Heart right ventricle (tissue), 16 donors: ENCODE measurements at regions of chr1 and their contacts with region 1.

Region 1: DNA sequence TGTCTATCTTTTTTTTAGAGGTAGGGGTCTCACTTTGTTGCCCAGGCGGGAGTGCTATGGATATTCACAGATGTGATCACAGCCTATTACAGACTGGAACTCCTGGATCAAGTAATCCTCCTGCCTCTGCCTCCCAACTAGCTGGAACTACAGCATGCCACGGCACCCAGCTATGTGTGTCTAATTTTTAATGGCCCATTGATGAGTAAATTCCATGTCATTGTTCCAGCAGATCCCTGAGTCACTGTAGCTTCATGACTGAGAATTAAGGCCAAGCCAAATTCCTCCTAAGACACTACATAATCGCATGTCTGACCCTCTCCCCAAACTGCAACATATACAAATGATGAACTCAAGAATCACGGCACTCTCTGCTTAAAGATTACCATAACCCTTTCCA is 84.2 kb upstream of the RGS2 start:
- DNase-seq: no peak
- ATAC-seq: no peak
- H3K4me3 ChIP-seq: no peak overlapping the region
- H3K27ac ChIP-seq: no peak overlapping the region
- H3K4me1 ChIP-seq: peaks cover 0 to 23% (median 8%) of the 10 kb centered on the region in 9 donors
- H3K27me3 ChIP-seq: no peaks in the 10 kb centered on the region
- CTCF ChIP-seq: no peak

Region 2: DNA sequence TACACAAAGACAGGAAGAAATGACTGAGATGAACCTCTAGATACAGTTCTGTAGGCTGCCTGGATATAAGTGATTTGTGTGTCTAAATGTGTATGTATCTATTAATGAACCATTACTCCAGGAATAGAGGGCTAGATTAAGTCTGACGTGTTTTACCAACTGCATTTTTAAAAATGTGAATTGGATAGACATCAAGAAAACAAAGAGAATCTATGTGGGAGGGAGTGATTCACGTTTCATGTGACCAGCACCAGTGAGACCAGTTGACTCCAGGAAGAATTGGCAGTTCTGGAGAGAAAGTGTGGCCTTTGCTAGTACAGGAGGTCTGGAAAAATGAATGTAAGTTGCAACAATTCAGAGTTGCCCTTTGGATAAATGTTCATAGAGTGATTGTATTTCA is 461.2 kb before region 1 on chr1:
- intact Hi-C with region 1: no loop called
- DNase-seq: no peak
- ATAC-seq: no peak
- H3K4me3 ChIP-seq: no peak overlapping the region
- H3K27ac ChIP-seq: no peak overlapping the region
- H3K4me1 ChIP-seq: peaks cover 0 to 3% (median 0%) of the 10 kb centered on the region in 9 donors
- H3K27me3 ChIP-seq: no peaks in the 10 kb centered on the region
- CTCF ChIP-seq: no peak

Region 3: GRCh38 chr1:192284927-192285326 is 439.7 kb before region 1 on chr1:
- intact Hi-C with region 1: no loop called
- DNase-seq: no peak
- ATAC-seq: no peak
- H3K4me3 ChIP-seq: no peak overlapping the region
- H3K27ac ChIP-seq: no peak overlapping the region
- H3K4me1 ChIP-seq: no peaks in the 10 kb centered on the region
- H3K27me3 ChIP-seq: no peaks in the 10 kb centered on the region
- CTCF ChIP-seq: no peak

Region 4: DNA sequence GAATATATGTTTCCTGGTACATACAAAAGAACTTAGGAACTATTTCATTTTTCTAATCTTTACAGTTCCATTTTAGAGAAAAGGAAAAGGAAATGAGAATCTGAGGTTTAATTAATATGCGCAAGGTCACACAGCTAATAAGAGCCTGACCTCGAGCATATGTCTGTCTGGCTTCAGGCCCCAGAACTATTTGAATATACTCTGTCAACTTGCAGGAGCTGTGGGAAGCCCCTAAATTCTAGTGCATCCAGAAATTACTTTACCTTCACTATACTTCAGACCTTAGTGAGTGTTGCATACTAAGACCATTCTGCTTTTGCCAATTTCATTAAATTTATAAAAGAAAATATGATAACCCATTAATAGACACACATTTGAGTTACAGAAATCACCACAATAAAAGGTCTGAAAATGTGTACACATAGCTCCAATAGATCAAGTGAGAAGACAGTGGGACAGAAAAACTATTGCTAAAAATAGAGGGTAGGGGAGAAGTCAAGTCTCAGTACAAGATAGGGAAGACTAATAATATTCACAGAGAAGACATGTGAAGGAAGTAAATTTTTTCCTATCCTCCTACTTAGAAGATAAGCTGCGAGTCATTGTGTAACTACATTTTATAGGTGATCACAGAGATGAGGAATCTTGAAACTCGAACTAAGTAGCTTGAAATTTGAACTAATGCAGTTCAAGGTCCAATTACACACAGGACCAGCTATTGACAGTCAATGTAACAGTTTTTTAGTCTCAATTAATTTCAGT is 84.9 kb before region 1 on chr1:
- intact Hi-C with region 1: loop called in 1 of 10 experiments (anchors 10 kb)
- DNase-seq: no peak
- ATAC-seq: peak in 1 of 8 donors; percentile 18
- H3K4me3 ChIP-seq: no peak overlapping the region
- H3K27ac ChIP-seq: no peak overlapping the region
- H3K4me1 ChIP-seq: peaks cover 0 to 8% (median 0%) of the 10 kb centered on the region in 9 donors
- H3K27me3 ChIP-seq: no peaks in the 10 kb centered on the region
- CTCF ChIP-seq: no peak

Region 5: GRCh38 chr1:192846950-192847349 is 122.3 kb after region 1 on chr1:
- intact Hi-C with region 1: no loop called
- DNase-seq: no peak
- ATAC-seq: no peak
- H3K4me3 ChIP-seq: no peak overlapping the region
- H3K27ac ChIP-seq: no peak overlapping the region
- H3K4me1 ChIP-seq: peaks cover 0 to 8% (median 0%) of the 10 kb centered on the region in 9 donors
- H3K27me3 ChIP-seq: no peaks in the 10 kb centered on the region
- CTCF ChIP-seq: no peak